ENCODE measurements at regions of chr3 and their contacts with region 1.

Region 1: DNA sequence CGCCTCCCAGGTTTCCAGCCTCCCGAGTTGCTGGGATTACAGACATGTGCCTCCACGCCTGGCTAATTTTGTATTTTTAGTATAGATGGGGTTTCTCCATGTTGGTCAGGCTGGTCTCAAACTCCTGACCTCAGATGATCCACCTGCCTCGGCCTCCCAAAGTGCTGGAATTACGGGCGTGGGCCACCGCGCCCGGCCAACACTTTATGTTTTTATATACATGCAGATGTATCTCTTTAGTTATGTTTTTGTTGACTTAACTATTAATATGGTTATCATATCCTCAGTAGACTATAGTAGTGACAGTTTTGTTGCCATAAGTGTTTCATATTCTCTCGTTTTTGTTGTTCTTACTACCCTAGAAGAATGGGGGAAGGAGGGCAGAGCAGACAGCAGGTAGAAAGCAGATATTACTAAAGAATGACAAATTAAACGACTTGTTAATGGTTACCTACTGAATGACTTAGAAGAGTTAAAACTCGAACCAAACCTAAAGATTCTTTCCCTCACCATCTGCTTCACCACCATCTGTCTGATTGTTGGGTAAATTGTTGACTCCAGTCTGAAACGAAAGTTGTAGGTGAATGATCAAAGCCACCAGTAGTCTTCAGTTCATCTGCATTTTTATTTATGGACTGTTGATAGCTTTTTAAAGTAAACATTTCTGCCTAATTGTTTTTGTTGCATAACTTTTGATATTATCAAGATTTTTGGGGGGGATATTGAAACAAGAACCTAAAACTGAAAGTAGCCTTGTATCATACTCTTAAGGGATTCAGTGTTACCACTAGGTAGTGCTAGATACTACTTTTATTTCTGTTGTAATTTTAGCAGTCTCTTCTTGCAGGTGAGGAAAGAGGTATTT is 89.3 kb downstream of the RASA2 start:
- DNase-seq: no peak
- H3K4me3 ChIP-seq: no peak overlapping the region
- H3K27ac ChIP-seq: no peak overlapping the region
- H3K4me1 ChIP-seq: no peaks in the 10 kb centered on the region
- H3K27me3 ChIP-seq: no peaks in the 10 kb centered on the region
- CTCF ChIP-seq: peak in 3 of 4 experiments; percentile 37 to 71 (median 60)
- POLR2A ChIP-seq: no peak

Region 2: DNA sequence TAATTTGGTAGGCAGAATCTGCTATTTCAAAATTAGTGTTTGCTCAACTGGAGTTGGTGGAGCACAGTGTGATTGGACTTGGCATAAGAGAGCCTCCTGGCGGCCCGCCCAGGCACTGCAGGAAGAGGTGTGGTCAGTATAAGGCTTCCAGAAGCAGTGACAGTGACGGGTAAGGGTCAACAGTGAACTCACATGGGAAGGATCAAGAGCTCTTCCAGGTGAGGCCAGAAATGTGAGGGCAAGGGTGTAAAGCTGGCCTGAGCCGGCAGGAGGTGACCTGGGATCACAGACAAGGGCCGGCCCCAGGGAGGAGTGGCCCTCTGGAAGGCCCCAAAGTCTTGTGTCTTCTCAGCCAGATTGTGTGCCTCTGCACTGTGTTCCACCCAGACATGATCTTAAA is 68.8 kb after region 1 on chr3:
- intact Hi-C with region 1: loop called (anchors 5 kb)
- DNase-seq: peak; percentile 62
- H3K4me3 ChIP-seq: no peak overlapping the region
- H3K27ac ChIP-seq: no peak overlapping the region
- H3K4me1 ChIP-seq: no peaks in the 10 kb centered on the region
- H3K27me3 ChIP-seq: no peaks in the 10 kb centered on the region
- CTCF ChIP-seq: peak in 3 of 4 experiments; percentile 37 to 47 (median 46)
- POLR2A ChIP-seq: no peak

Region 3: DNA sequence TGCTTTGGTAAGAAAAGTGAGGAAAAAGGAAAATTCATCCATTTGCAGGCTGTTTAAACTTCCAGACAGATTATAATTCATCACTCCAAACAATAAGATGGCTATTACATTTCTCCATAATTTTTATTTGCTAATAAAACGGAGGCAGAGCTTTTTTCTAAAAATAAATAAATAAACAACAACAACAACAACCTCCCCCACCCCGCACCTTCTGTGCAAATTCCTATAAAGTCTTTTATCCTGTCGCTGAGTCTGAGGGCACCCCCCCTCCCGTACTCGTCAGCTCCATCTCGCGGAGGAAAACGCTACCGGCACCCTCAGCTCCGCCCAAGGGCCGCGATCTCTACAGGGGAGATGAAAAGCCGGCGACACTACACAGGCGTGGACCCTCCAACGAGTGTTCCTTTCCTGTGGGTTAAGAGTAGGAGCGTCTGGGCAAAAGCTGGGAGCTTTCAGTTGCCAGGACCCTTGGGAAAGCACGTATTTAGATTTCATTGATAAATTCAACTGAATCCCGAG is 299.3 kb after region 1 on chr3:
- intact Hi-C with region 1: loop called (anchors 2 kb)
- DNase-seq: peak; percentile 91
- H3K4me3 ChIP-seq: peak overlapping the region; percentile 95 to 96
- H3K27ac ChIP-seq: peak overlapping the region; percentile 97 to 99
- H3K4me1 ChIP-seq: peaks cover 11% of the 10 kb centered on the region
- H3K27me3 ChIP-seq: no peaks in the 10 kb centered on the region
- CTCF ChIP-seq: peak; percentile 71 to 90 (median 81)
- POLR2A ChIP-seq: no peak

Measured in prostate gland (tissue), 2 donors.